ENCODE measurements at regions of chr15 and their contacts with region 1.

Region 1: DNA sequence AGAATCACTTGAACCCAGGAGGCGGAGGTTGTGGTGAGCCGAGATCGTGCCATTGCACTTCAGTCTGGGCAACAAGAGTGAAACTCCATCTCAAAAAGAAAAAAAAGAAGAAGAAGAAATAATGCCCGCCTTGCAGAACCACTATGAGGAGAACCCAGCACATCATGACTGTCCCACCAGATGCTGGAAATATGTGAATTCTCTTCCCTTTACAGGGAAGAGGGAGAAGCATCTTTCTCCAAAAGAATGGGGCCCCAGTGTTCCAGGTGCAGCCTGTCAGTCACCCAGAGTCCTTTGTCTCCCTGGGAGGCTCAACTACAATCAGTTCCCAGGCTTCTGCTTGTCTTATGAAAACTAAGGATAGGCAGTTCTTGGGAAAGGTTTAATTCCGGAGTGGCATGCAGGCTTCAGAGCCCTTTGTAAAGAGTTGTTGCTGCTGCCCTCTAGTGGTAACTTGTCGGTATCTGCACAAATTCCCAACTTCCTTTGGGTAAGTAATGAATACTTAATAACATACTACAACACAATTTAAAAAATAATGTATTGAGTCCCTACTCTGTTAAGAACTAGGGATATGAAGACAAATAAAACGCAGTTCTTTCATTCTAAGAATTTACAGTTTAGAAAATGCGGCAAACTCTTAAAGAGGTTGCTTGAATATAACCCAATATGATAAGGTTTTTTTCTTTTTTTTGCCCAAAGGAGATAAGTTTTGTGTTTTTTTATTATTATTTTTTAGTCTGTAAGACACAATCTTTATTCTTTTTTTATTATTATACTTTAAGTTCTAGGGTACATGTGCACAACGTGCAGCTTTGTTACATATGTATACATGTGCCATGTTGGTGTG is 18.6 kb upstream of the TICRR start:
- DNase-seq: peak; percentile 83
- H3K4me3 Mint-ChIP-seq: no peak overlapping the region
- H3K27ac Mint-ChIP-seq: no peak overlapping the region
- H3K4me1 Mint-ChIP-seq: no peaks in the 10 kb centered on the region
- H3K27me3 Mint-ChIP-seq: peaks cover 14% of the 10 kb centered on the region

Region 2: GRCh38 chr15:89442671-89443307 is 113.8 kb before region 1 on chr15:
- intact Hi-C with region 1: loop called (anchors 5 kb)
- DNase-seq: peak; percentile 84
- H3K4me3 Mint-ChIP-seq: no peak overlapping the region
- H3K27ac Mint-ChIP-seq: no peak overlapping the region
- H3K4me1 Mint-ChIP-seq: no peaks in the 10 kb centered on the region
- H3K27me3 Mint-ChIP-seq: peaks cover 4% of the 10 kb centered on the region

Region 3: GRCh38 chr15:89494935-89495637 is 61.6 kb before region 1 on chr15:
- intact Hi-C with region 1: loop called (anchors 1 kb)
- DNase-seq: peak; percentile 75
- H3K4me3 Mint-ChIP-seq: no peak overlapping the region
- H3K27ac Mint-ChIP-seq: no peak overlapping the region
- H3K4me1 Mint-ChIP-seq: no peaks in the 10 kb centered on the region
- H3K27me3 Mint-ChIP-seq: peaks cover 39% of the 10 kb centered on the region

Region 4: GRCh38 chr15:89569090-89569791 is 12.6 kb after region 1 on chr15:
- intact Hi-C with region 1: no loop called
- DNase-seq: no peak
- H3K4me3 Mint-ChIP-seq: no peak overlapping the region
- H3K27ac Mint-ChIP-seq: no peak overlapping the region
- H3K4me1 Mint-ChIP-seq: peaks cover 2% of the 10 kb centered on the region
- H3K27me3 Mint-ChIP-seq: peaks cover 44% of the 10 kb centered on the region